ENCODE measurements at regions of chr3 and their contacts with region 1.

Region 1: GRCh38 chr3:71305231-71306206 is 278.0 kb downstream of the FOXP1 start:
- DNase-seq: no peak
- ATAC-seq: peak; percentile 77
- H3K4me3 ChIP-seq: peak overlapping the region; percentile 59 to 93
- H3K27ac ChIP-seq: peak overlapping the region; percentile 23 to 88
- H3K4me1 ChIP-seq: peaks cover 0 to 8% of the 10 kb centered on the region in 2 donors
- H3K27me3 ChIP-seq: no peaks in the 10 kb centered on the region

Region 2: GRCh38 chr3:70539908-70540307 is 765.6 kb before region 1 on chr3:
- intact Hi-C with region 1: loop called in 1 of 2 experiments (anchors 10 kb)
- DNase-seq: no peak
- ATAC-seq: no peak
- H3K4me3 ChIP-seq: no peak overlapping the region
- H3K27ac ChIP-seq: no peak overlapping the region
- H3K4me1 ChIP-seq: no peaks in the 10 kb centered on the region
- H3K27me3 ChIP-seq: no peaks in the 10 kb centered on the region

Region 3: DNA sequence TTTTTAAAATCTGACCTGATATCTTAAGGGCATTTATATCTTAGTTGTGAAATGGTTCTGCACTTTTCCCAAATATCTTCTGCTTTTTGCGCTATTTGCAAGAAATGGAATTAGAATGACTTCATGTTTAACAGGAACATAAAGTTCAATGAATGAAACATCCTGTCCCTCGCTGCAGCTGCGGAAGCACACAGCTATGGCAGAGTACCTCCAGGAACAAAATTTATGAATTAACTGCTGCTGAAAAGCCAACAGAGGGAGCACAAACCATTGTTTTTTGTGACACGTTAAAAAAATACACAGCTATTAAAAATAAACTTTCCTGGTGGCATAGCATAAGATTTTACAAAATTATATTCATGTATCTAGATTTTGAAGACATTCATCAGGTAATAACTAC is 588.7 kb before region 1 on chr3:
- intact Hi-C with region 1: loop called (anchors 5 to 10 kb)
- DNase-seq: peak in 1 of 2 donors; percentile 45
- ATAC-seq: no peak
- H3K4me3 ChIP-seq: no peak overlapping the region
- H3K27ac ChIP-seq: no peak overlapping the region
- H3K4me1 ChIP-seq: no peaks in the 10 kb centered on the region
- H3K27me3 ChIP-seq: no peaks in the 10 kb centered on the region

Region 4: DNA sequence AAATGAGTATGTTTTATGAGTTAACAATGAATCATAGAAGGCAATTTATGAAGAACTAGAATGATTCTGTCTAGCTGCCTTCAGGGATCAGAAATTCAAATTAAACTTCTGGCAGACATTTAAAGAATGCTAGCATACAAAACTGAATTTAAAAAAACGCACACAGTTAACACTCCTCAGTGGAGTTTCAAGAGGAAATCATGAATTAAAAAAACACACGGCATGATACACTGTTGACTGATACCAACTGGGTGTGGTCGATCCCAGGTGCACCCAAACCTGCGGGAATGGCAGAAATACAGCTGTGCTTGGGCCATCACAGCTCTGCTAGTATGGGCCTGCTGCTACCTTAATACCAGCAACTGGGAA is 248.0 kb before region 1 on chr3:
- intact Hi-C with region 1: loop called (anchors 1 to 10 kb)
- DNase-seq: no peak
- ATAC-seq: no peak
- H3K4me3 ChIP-seq: peak overlapping the region in 1 of 2 donors; percentile 11
- H3K27ac ChIP-seq: peak overlapping the region; percentile 15 to 88
- H3K4me1 ChIP-seq: peaks cover 14 to 17% of the 10 kb centered on the region in 2 donors
- H3K27me3 ChIP-seq: no peaks in the 10 kb centered on the region

Region 5: DNA sequence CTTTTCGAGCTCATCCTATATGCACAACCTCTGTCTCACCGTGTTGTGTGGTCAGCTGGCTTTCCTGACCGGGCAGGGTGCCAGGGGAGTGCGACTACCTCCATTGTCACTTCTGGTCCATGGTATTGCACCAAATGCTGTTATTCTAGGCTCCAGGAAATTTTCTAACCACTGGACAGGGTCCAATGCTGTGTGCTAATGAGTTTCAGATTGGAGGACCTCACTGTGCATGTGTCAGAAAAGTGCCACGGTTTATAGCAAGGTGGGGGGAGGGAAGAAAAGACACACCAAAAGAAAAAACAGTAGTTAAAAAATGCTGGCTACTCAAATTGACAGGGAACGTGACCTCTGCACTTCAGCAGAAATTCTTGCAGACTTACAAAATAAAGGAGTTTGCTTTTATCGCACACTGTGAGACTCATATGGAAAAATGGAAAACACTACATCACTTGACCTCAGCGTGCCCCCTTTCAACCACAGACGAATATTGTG is 202.0 kb before region 1 on chr3:
- intact Hi-C with region 1: loop called (anchors 10 kb)
- DNase-seq: peak; percentile 68 to 85
- ATAC-seq: no peak
- H3K4me3 ChIP-seq: no peak overlapping the region
- H3K27ac ChIP-seq: peak overlapping the region in 1 of 2 donors; percentile 91
- H3K4me1 ChIP-seq: peaks cover 17 to 26% of the 10 kb centered on the region in 2 donors
- H3K27me3 ChIP-seq: no peaks in the 10 kb centered on the region

Region 6: GRCh38 chr3:71247221-71247976 is 58.1 kb before region 1 on chr3:
- intact Hi-C with region 1: loop called (anchors 5 to 10 kb)
- DNase-seq: no peak
- ATAC-seq: no peak
- H3K4me3 ChIP-seq: no peak overlapping the region
- H3K27ac ChIP-seq: peak overlapping the region in 1 of 2 donors; percentile 42
- H3K4me1 ChIP-seq: peaks cover 0 to 2% of the 10 kb centered on the region in 2 donors
- H3K27me3 ChIP-seq: no peaks in the 10 kb centered on the region